CD8-positive, alpha-beta T cell (primary cell): ENCODE measurements at regions of chr16 and their contacts with region 1.

Region 1: DNA sequence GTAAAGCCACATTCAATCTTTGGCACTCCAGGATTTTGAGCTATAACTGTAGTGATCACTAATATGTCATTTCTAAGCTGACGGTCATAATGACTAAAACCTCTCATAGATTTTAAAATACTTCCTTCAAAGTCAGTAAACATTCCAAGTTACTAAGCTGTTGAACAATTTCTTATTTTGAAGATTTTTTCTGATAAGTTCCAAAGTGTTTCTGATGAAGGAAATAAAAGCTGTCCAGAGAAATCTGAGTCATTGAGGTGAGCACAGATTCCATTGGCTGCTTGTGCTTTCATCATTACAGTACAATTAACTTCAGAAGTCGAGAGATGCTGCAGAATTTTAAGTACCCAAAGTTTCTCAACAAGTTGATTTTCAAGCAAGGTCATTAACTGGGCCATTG is 23.9 kb downstream of the NLRC5 start:
- DNase-seq: no peak
- ATAC-seq: no peak
- H3K4me3 ChIP-seq: no peak overlapping the region
- H3K4me3 Mint-ChIP-seq: peak overlapping the region; percentile 54
- H3K27ac ChIP-seq: peak overlapping the region in 1 of 2 experiments; percentile 89
- H3K27ac Mint-ChIP-seq: peak overlapping the region; percentile 97
- H3K4me1 ChIP-seq: peaks cover 90% of the 10 kb centered on the region
- H3K4me1 Mint-ChIP-seq: peaks cover 83% of the 10 kb centered on the region
- H3K27me3 ChIP-seq: no peaks in the 10 kb centered on the region
- H3K27me3 Mint-ChIP-seq: no peaks in the 10 kb centered on the region
- CTCF ChIP-seq: no peak

Region 2: DNA sequence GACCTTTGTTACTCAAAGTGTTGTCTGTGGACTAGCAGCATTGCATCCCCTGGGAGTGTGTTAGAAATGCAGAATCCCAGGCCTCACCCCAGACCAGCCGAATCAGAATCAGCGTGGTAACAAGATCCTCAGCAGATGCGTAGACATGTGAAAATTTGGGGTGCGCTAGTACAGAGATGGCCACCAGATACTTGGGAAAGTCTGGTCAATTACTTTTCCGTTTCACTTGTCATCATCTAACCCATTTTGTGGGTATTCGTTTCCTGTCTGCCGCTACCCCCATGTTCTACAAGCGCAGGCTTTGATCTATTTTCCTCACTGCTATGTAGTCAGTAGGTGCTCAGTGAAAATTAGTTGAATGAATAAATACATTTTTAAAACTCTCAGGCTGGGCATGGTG is 114.4 kb before region 1 on chr16:
- CTCF ChIA-PET with region 1: no interaction called
- POLR2A ChIA-PET with region 1: no interaction called
- intact Hi-C with region 1: no loop called
- DNase-seq: peak in 2 of 9 experiments; percentile 24 to 54
- ATAC-seq: peak; percentile 42
- H3K4me3 ChIP-seq: no peak overlapping the region
- H3K4me3 Mint-ChIP-seq: no peak overlapping the region
- H3K27ac ChIP-seq: no peak overlapping the region
- H3K27ac Mint-ChIP-seq: no peak overlapping the region
- H3K4me1 ChIP-seq: peaks cover 19% of the 10 kb centered on the region
- H3K4me1 Mint-ChIP-seq: peaks cover 23% of the 10 kb centered on the region
- H3K27me3 ChIP-seq: no peaks in the 10 kb centered on the region
- H3K27me3 Mint-ChIP-seq: peaks cover 2% of the 10 kb centered on the region
- CTCF ChIP-seq: no peak

Region 3: DNA sequence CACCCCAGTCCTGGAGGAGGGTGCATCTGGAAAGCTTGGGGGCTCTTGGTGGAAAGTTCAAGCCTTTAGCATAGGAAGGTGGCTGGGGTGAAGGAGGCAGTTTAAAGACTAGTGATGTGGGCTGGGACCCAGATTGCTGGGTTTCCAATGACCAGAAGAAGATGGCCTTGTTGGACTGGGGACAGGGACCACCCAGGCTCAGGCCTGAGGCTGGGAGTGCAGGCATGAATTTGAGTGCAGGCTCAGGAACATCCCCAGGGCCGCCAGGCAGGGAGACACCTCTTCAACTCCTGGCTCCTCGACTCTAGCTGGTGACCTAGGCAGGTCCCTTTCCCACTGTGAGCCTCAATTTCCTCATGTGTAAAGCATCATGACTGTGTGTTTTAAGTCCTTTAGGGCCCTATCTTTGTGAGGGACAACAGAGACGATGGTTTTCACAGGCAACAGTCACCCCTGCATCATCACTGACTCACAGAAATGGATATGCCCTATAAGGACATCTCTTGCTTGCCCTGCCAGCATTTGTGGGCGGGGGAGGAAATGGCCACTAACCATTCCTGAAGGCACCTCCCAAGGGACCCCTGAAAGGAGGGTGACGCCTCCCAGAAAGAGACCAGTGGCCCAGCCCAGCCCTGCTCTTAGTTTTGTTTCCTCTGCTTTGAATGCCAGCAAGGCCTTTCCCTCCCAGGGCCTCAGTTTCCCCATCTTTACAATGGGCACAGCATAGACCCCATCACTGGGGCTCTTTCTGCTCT is 12.8 kb before region 1 on chr16:
- CTCF ChIA-PET with region 1: interaction called, 5 read pairs
- POLR2A ChIA-PET with region 1: interaction called, 56 read pairs
- intact Hi-C with region 1: loop called (anchors 1 to 2 kb)
- DNase-seq: peak in 4 of 9 experiments; percentile 61 to 69 (median 65)
- ATAC-seq: peak; percentile 65
- H3K4me3 ChIP-seq: peak overlapping the region; percentile 18 to 26
- H3K4me3 Mint-ChIP-seq: peak overlapping the region; percentile 71
- H3K27ac ChIP-seq: peak overlapping the region; percentile 58 to 90
- H3K27ac Mint-ChIP-seq: peak overlapping the region; percentile 96
- H3K4me1 ChIP-seq: peaks cover 90% of the 10 kb centered on the region
- H3K4me1 Mint-ChIP-seq: peaks cover 96% of the 10 kb centered on the region
- H3K27me3 ChIP-seq: no peaks in the 10 kb centered on the region
- H3K27me3 Mint-ChIP-seq: no peaks in the 10 kb centered on the region
- CTCF ChIP-seq: no peak

Region 4: DNA sequence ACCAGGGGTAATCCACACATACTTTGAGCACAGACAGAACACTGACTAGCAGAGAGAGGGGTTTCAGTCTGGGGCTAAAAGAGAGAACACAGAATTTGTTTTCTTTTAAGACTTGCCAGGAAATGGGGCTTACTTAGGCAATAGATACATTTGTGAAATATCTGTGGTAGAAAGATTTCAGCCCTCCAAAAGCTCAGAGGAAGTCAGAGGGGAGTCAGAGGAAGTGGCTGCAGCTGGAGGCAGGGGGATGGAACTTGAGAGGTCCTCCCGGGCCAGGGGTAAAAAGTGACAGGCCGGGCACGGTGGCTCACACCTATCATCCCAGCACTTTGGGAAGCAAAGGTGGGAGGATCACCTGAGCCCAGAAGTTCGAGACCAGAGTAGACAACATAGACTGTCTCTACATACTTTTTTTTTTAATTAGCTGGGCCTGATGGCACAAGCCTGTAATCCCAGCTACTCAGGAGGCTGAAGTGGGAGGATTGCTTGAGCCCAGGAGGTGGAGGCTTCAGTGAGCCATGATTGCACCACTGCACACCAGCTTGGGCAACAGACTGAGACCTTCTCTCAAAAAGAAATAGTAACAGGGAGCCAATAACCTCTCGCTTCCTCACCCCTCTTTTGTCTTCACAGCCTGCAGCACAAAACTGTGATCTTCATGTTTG is 26.1 kb after region 1 on chr16:
- CTCF ChIA-PET with region 1: interaction called, 8 read pairs
- POLR2A ChIA-PET with region 1: interaction called, 7 read pairs
- intact Hi-C with region 1: loop called in 1 of 2 experiments (anchors 1 kb)
- DNase-seq: peak in 7 of 9 experiments; percentile 24 to 71 (median 45)
- ATAC-seq: peak; percentile 10
- H3K4me3 ChIP-seq: peak overlapping the region in 1 of 2 experiments; percentile 54
- H3K4me3 Mint-ChIP-seq: peak overlapping the region; percentile 71
- H3K27ac ChIP-seq: peak overlapping the region; percentile 17 to 80
- H3K27ac Mint-ChIP-seq: peak overlapping the region; percentile 99
- H3K4me1 ChIP-seq: peaks cover 97% of the 10 kb centered on the region
- H3K4me1 Mint-ChIP-seq: peaks cover 89% of the 10 kb centered on the region
- H3K27me3 ChIP-seq: no peaks in the 10 kb centered on the region
- H3K27me3 Mint-ChIP-seq: no peaks in the 10 kb centered on the region
- CTCF ChIP-seq: no peak

Region 5: DNA sequence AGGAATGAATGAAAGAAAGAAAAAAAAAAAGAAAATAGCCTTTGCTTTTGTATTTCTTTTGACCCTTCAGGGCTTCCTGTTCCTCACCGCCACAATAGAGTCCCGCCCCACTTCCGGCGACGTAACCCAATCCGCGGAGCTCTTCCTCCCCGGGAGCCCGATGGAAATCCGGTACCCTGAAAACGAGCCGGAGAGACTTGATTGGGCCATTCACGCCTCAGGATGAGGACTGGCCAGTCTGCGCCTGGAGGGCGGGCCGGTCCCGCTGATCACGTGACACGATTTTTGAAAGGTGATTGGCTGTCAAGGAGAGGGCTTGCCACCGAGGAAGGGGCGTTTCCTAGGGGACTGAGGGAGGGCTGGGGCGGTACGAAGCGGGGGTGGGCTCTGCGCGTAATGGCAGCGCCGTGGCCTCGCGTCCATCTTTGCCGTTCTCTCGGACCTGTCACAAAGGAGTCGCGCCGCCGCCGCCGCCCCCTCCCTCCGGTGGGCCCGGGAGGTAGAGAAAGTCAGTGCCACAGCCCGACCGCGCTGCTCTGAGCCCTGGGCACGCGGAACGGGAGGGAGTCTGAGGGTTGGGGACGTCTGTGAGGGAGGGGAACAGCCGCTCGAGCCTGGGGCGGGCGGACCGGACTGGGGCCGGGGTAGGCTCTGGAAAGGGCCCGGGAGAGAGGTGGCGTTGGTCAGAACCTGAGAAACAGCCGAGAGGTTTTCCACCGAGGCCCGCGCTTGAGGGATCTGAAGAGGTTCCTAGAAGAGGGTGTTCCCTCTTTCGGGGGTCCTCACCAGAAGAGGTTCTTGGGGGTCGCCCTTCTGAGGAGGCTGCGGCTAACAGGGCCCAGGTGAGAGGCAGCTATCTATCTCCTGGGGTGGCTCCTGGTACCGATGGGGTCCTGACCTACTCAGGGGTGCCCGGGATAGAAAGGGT is 173.0 kb after region 1 on chr16 and contains the starts of genes PSME3IP1 and RSPRY1:
- CTCF ChIA-PET with region 1: no interaction called
- POLR2A ChIA-PET with region 1: no interaction called
- intact Hi-C with region 1: no loop called
- DNase-seq: peak; percentile 96 to 100 (median 98)
- ATAC-seq: peak; percentile 82
- H3K4me3 ChIP-seq: peak within 1 kb of the TSS; percentile 92 to 100
- H3K4me3 Mint-ChIP-seq: peak within 1 kb of the TSS; percentile 99
- H3K27ac ChIP-seq: peak within 1 kb of the TSS; percentile 84 to 94
- H3K27ac Mint-ChIP-seq: peak within 1 kb of the TSS; percentile 98
- H3K4me1 ChIP-seq: peaks cover 34% of the 10 kb centered on the region
- H3K4me1 Mint-ChIP-seq: peaks cover 58% of the 10 kb centered on the region
- H3K27me3 ChIP-seq: no peaks in the 10 kb centered on the region
- H3K27me3 Mint-ChIP-seq: no peaks in the 10 kb centered on the region
- CTCF ChIP-seq: no peak
- total RNA-seq, gene PSME3IP1: 82.6 to 87.2 TPM
- total RNA-seq, gene RSPRY1: 22.4 to 23.2 TPM